Right lobe of liver (tissue), 6 donors: ENCODE measurements at regions of chr4 and their contacts with region 1.

Region 1: GRCh38 chr4:22410645-22411247 is 105.1 kb downstream of the ADGRA3 start:
- DNase-seq: no peak
- ATAC-seq: peak in 1 of 4 donors; percentile 25
- H3K4me3 ChIP-seq: no peak overlapping the region
- H3K27ac ChIP-seq: no peak overlapping the region
- H3K4me1 ChIP-seq: no peaks in the 10 kb centered on the region
- H3K27me3 ChIP-seq: no peaks in the 10 kb centered on the region
- CTCF ChIP-seq: peak; percentile 49 to 70 (median 56)
- POLR2A ChIP-seq: no peak

Region 2: GRCh38 chr4:22607382-22607781 is 196.6 kb after region 1 on chr4:
- intact Hi-C with region 1: loop called in 1 of 2 experiments (anchors 10 kb)
- DNase-seq: peak; percentile 47 to 64 (median 61)
- ATAC-seq: peak; percentile 96 to 100 (median 99)
- H3K4me3 ChIP-seq: no peak overlapping the region
- H3K27ac ChIP-seq: no peak overlapping the region
- H3K4me1 ChIP-seq: peaks cover 0 to 11% (median 0%) of the 10 kb centered on the region in 4 donors
- H3K27me3 ChIP-seq: no peaks in the 10 kb centered on the region
- CTCF ChIP-seq: peak; percentile 43 to 67 (median 61)
- POLR2A ChIP-seq: no peak

Region 3: GRCh38 chr4:22688236-22688635 is 277.5 kb after region 1 on chr4:
- intact Hi-C with region 1: loop called in 1 of 2 experiments (anchors 10 kb)
- DNase-seq: no peak
- ATAC-seq: no peak
- H3K4me3 ChIP-seq: no peak overlapping the region
- H3K27ac ChIP-seq: no peak overlapping the region
- H3K4me1 ChIP-seq: peaks cover 0 to 30% (median 5%) of the 10 kb centered on the region in 4 donors
- H3K27me3 ChIP-seq: no peaks in the 10 kb centered on the region
- CTCF ChIP-seq: no peak
- POLR2A ChIP-seq: no peak